CD8-positive, alpha-beta T cell (primary cell): ENCODE measurements at regions of chr10 and their contacts with region 1.

Region 1: GRCh38 chr10:83301732-83302131 is 837.6 kb upstream of the GHITM start:
- DNase-seq: no peak
- ATAC-seq: no peak
- H3K4me3 ChIP-seq: no peak overlapping the region
- H3K4me3 Mint-ChIP-seq: no peak overlapping the region
- H3K27ac ChIP-seq: no peak overlapping the region
- H3K27ac Mint-ChIP-seq: no peak overlapping the region
- H3K4me1 ChIP-seq: no peaks in the 10 kb centered on the region
- H3K4me1 Mint-ChIP-seq: no peaks in the 10 kb centered on the region
- H3K27me3 ChIP-seq: no peaks in the 10 kb centered on the region
- H3K27me3 Mint-ChIP-seq: no peaks in the 10 kb centered on the region
- CTCF ChIP-seq: no peak

Region 2: GRCh38 chr10:83287374-83287773 is 14.4 kb before region 1 on chr10:
- CTCF ChIA-PET with region 1: no interaction called
- POLR2A ChIA-PET with region 1: no interaction called
- intact Hi-C with region 1: no loop called
- DNase-seq: no peak
- ATAC-seq: no peak
- H3K4me3 ChIP-seq: no peak overlapping the region
- H3K4me3 Mint-ChIP-seq: no peak overlapping the region
- H3K27ac ChIP-seq: no peak overlapping the region
- H3K27ac Mint-ChIP-seq: no peak overlapping the region
- H3K4me1 ChIP-seq: no peaks in the 10 kb centered on the region
- H3K4me1 Mint-ChIP-seq: no peaks in the 10 kb centered on the region
- H3K27me3 ChIP-seq: no peaks in the 10 kb centered on the region
- H3K27me3 Mint-ChIP-seq: no peaks in the 10 kb centered on the region
- CTCF ChIP-seq: no peak

Region 3: GRCh38 chr10:83564889-83565588 is 263.3 kb after region 1 on chr10:
- CTCF ChIA-PET with region 1: no interaction called
- POLR2A ChIA-PET with region 1: no interaction called
- intact Hi-C with region 1: no loop called
- DNase-seq: no peak
- ATAC-seq: no peak
- H3K4me3 ChIP-seq: no peak overlapping the region
- H3K4me3 Mint-ChIP-seq: no peak overlapping the region
- H3K27ac ChIP-seq: no peak overlapping the region
- H3K27ac Mint-ChIP-seq: no peak overlapping the region
- H3K4me1 ChIP-seq: no peaks in the 10 kb centered on the region
- H3K4me1 Mint-ChIP-seq: no peaks in the 10 kb centered on the region
- H3K27me3 ChIP-seq: no peaks in the 10 kb centered on the region
- H3K27me3 Mint-ChIP-seq: no peaks in the 10 kb centered on the region
- CTCF ChIP-seq: no peak

Region 4: GRCh38 chr10:85280014-85280413 is 1978.3 kb after region 1 on chr10:
- CTCF ChIA-PET with region 1: no interaction called
- POLR2A ChIA-PET with region 1: no interaction called
- intact Hi-C with region 1: loop called in 1 of 2 experiments (anchors 10 kb)
- DNase-seq: no peak
- ATAC-seq: no peak
- H3K4me3 ChIP-seq: no peak overlapping the region
- H3K4me3 Mint-ChIP-seq: no peak overlapping the region
- H3K27ac ChIP-seq: no peak overlapping the region
- H3K27ac Mint-ChIP-seq: no peak overlapping the region
- H3K4me1 ChIP-seq: no peaks in the 10 kb centered on the region
- H3K4me1 Mint-ChIP-seq: no peaks in the 10 kb centered on the region
- H3K27me3 ChIP-seq: no peaks in the 10 kb centered on the region
- H3K27me3 Mint-ChIP-seq: no peaks in the 10 kb centered on the region
- CTCF ChIP-seq: no peak